ENCODE measurements at regions of chr3 and their contacts with region 1.

Region 1: GRCh38 chr3:17258823-17259436 is 374.2 kb downstream of the PLCL2 start:
- DNase-seq: peak in 4 of 14 experiments; percentile 34 to 69 (median 60)
- ATAC-seq: peak; percentile 39
- H3K4me3 ChIP-seq: no peak overlapping the region
- H3K4me3 Mint-ChIP-seq: no peak overlapping the region
- H3K27ac ChIP-seq: no peak overlapping the region
- H3K27ac Mint-ChIP-seq: no peak overlapping the region
- H3K4me1 ChIP-seq: no peaks in the 10 kb centered on the region
- H3K4me1 Mint-ChIP-seq: no peaks in the 10 kb centered on the region
- H3K27me3 ChIP-seq: no peaks in the 10 kb centered on the region
- H3K27me3 Mint-ChIP-seq: no peaks in the 10 kb centered on the region
- CTCF ChIP-seq: peak; percentile 92

Region 2: GRCh38 chr3:17412950-17413530 is 154.1 kb after region 1 on chr3:
- CTCF ChIA-PET with region 1: no interaction called
- POLR2A ChIA-PET with region 1: no interaction called
- intact Hi-C with region 1: loop called (anchors 2 kb)
- DNase-seq: peak in 4 of 14 experiments; percentile 5 to 69 (median 66)
- ATAC-seq: peak; percentile 32
- H3K4me3 ChIP-seq: no peak overlapping the region
- H3K4me3 Mint-ChIP-seq: no peak overlapping the region
- H3K27ac ChIP-seq: no peak overlapping the region
- H3K27ac Mint-ChIP-seq: no peak overlapping the region
- H3K4me1 ChIP-seq: no peaks in the 10 kb centered on the region
- H3K4me1 Mint-ChIP-seq: no peaks in the 10 kb centered on the region
- H3K27me3 ChIP-seq: no peaks in the 10 kb centered on the region
- H3K27me3 Mint-ChIP-seq: no peaks in the 10 kb centered on the region
- CTCF ChIP-seq: peak; percentile 86

Region 3: DNA sequence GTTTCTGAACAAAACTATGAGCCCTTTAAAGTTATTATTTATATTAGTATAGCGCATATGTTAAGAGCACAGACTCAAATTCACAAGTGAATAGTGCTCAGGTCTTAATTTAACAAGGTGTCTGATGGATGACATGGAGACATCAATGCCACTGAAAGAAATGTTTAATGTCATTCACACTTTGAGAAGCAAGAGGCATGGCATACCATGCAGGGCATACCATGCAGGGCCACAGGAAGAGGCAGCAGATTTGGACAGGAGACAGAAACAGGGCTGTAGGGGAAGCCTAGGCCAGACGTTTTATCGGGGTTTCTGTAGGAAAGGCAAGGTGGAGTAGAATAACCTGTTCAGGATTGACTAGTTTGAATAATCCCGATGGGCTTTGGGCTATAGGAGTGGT is 1739.1 kb after region 1 on chr3:
- CTCF ChIA-PET with region 1: no interaction called
- POLR2A ChIA-PET with region 1: no interaction called
- intact Hi-C with region 1: loop called in 1 of 2 experiments (anchors 10 kb)
- DNase-seq: no peak
- ATAC-seq: no peak
- H3K4me3 ChIP-seq: no peak overlapping the region
- H3K4me3 Mint-ChIP-seq: no peak overlapping the region
- H3K27ac ChIP-seq: no peak overlapping the region
- H3K27ac Mint-ChIP-seq: no peak overlapping the region
- H3K4me1 ChIP-seq: no peaks in the 10 kb centered on the region
- H3K4me1 Mint-ChIP-seq: no peaks in the 10 kb centered on the region
- H3K27me3 ChIP-seq: no peaks in the 10 kb centered on the region
- H3K27me3 Mint-ChIP-seq: no peaks in the 10 kb centered on the region
- CTCF ChIP-seq: no peak

Measured in CD4-positive, alpha-beta T cell (primary cell).